ENCODE measurements at regions of chr4 and their contacts with region 1.

Region 1: DNA sequence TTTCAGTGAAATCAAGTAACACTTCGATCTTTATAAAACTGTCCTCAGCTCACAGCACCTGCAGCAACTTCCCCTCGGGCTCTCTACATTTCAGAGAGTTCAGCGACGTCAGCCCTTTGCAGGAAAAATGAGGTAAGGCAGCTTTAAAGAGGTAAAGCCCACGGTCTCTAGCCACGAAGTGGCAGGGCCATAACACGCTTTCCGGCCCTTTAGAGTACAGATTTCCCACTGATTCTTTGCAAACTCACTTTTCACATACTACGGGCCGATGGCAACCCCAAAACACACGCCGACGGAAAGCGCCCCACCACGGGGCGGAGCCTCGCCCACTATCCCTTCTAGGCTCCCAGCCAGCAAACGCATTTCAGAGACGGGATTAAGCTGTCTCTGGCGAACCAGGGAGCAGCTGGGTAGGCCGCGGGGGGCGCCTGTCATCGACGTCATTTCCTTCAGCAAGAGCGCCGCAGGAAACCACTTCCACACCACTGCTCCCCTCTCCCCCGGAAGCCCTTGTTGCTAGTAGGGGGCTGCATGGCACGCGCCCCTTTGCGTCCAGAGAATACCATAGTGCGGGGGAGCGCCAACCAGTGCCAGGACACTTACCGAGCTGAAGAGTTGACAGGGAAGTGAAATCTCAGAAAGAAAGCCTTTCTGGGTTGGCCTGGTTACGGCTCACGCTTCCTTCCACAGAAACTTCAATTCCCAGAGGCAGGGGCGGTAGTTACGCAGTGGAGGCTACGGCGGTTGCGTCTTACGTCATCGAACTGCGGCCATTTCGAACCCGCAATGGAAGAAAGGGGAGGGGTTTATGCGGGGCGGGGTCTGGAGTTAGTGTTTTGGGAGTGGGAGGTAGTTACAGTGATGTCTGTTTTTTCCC is at the start of gene TRMT10A:
- DNase-seq: peak; percentile 87 to 98 (median 95)
- ATAC-seq: peak; percentile 79
- H3K4me3 ChIP-seq: peak within 1 kb of the TSS; percentile 71 to 83
- H3K4me3 Mint-ChIP-seq: peak within 1 kb of the TSS; percentile 94
- H3K27ac ChIP-seq: peak within 1 kb of the TSS; percentile 92 to 96
- H3K27ac Mint-ChIP-seq: peak within 1 kb of the TSS; percentile 99
- H3K4me1 ChIP-seq: no peaks in the 10 kb centered on the region
- H3K4me1 Mint-ChIP-seq: peaks cover 19% of the 10 kb centered on the region
- H3K27me3 ChIP-seq: no peaks in the 10 kb centered on the region
- H3K27me3 Mint-ChIP-seq: peaks cover 19% of the 10 kb centered on the region
- CTCF ChIP-seq: no peak
- total RNA-seq, gene TRMT10A: 0.90 to 1.5 TPM

Region 2: DNA sequence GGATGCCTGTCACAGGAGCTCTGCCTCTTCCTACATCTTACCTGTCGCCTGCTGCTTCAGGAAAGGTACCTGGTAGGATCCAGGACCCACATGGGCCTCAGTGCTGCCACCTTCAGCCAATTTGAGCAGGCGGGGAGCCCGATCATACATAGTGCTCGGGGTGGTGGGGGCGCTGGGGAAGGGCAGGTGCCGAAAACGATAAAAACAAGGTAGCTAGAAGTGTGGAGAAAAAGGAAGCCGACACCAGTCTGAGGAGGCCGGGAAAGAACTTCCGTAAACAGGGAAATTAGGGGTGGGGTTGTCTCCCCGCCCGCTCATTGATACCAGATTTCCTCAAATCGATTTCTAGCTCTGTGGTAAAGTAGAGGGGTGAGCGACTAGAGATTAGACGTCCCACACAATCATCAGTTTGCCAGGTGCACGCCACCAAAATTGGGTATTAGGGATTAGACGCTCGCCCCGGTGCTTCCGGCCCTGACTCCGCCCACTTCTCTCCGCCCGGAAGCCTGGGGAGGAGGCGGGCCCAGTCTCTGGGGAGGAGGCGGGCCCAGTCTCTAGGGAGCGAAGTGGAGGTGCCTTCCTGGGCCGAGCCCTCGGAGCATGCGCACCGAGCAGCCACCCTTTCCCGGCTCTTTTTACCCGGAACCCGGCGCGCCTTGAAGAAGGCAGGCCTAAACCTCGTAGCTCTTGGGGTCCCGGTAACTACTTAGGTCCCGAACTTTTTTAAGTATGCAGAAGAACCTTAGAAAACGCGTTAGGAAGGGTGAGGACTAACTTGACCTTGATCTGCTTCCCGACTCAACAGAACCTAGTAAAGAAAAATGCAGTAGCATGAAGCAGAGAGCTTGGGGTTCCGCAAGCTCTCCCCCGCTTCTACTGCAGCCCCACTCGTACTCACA is 1420.3 kb before region 1 on chr4 and contains the start of gene STPG2:
- CTCF ChIA-PET with region 1: no interaction called
- POLR2A ChIA-PET with region 1: no interaction called
- intact Hi-C with region 1: loop called (anchors 1 to 5 kb)
- DNase-seq: peak; percentile 87 to 96 (median 93)
- ATAC-seq: peak; percentile 99
- H3K4me3 ChIP-seq: peak within 1 kb of the TSS; percentile 69 to 70
- H3K4me3 Mint-ChIP-seq: peak within 1 kb of the TSS; percentile 94
- H3K27ac ChIP-seq: peak within 1 kb of the TSS; percentile 68 to 90
- H3K27ac Mint-ChIP-seq: peak within 1 kb of the TSS; percentile 96
- H3K4me1 ChIP-seq: peaks cover 7% of the 10 kb centered on the region
- H3K4me1 Mint-ChIP-seq: peaks cover 17% of the 10 kb centered on the region
- H3K27me3 ChIP-seq: peaks cover 0 to 2% of the 10 kb centered on the region in 2 experiments
- H3K27me3 Mint-ChIP-seq: no peaks in the 10 kb centered on the region
- CTCF ChIP-seq: peak; percentile 64
- total RNA-seq, gene STPG2: not detected

Region 3: GRCh38 chr4:98928505-98929340 is 634.8 kb before region 1 on chr4 and contains the start of gene EIF4E:
- CTCF ChIA-PET with region 1: no interaction called
- POLR2A ChIA-PET with region 1: no interaction called
- intact Hi-C with region 1: loop called in 1 of 2 experiments (anchors 5 kb)
- DNase-seq: peak; percentile 93 to 99 (median 94)
- ATAC-seq: peak; percentile 80
- H3K4me3 ChIP-seq: peak within 1 kb of the TSS; percentile 99 to 100
- H3K4me3 Mint-ChIP-seq: peak within 1 kb of the TSS; percentile 99
- H3K27ac ChIP-seq: peak within 1 kb of the TSS; percentile 89 to 94
- H3K27ac Mint-ChIP-seq: peak within 1 kb of the TSS; percentile 97
- H3K4me1 ChIP-seq: peaks cover 15% of the 10 kb centered on the region
- H3K4me1 Mint-ChIP-seq: peaks cover 46% of the 10 kb centered on the region
- H3K27me3 ChIP-seq: no peaks in the 10 kb centered on the region
- H3K27me3 Mint-ChIP-seq: no peaks in the 10 kb centered on the region
- CTCF ChIP-seq: peak; percentile 32
- total RNA-seq, gene EIF4E: 66.7 to 68.5 TPM

Region 4: GRCh38 chr4:99504804-99505569 is 58.6 kb before region 1 on chr4:
- CTCF ChIA-PET with region 1: no interaction called
- POLR2A ChIA-PET with region 1: interaction called, 3 read pairs
- intact Hi-C with region 1: loop called in 1 of 2 experiments (anchors 1 kb)
- DNase-seq: no peak
- ATAC-seq: no peak
- H3K4me3 ChIP-seq: no peak overlapping the region
- H3K4me3 Mint-ChIP-seq: no peak overlapping the region
- H3K27ac ChIP-seq: no peak overlapping the region
- H3K27ac Mint-ChIP-seq: peak overlapping the region; percentile 23
- H3K4me1 ChIP-seq: peaks cover 35% of the 10 kb centered on the region
- H3K4me1 Mint-ChIP-seq: peaks cover 39% of the 10 kb centered on the region
- H3K27me3 ChIP-seq: no peaks in the 10 kb centered on the region
- H3K27me3 Mint-ChIP-seq: no peaks in the 10 kb centered on the region
- CTCF ChIP-seq: no peak

Region 5: GRCh38 chr4:99885063-99885664 is 321.6 kb after region 1 on chr4:
- CTCF ChIA-PET with region 1: interaction called, 7 read pairs
- POLR2A ChIA-PET with region 1: no interaction called
- intact Hi-C with region 1: loop called (anchors 1 kb)
- DNase-seq: peak in 4 of 9 experiments; percentile 20 to 72 (median 41)
- ATAC-seq: no peak
- H3K4me3 ChIP-seq: no peak overlapping the region
- H3K4me3 Mint-ChIP-seq: no peak overlapping the region
- H3K27ac ChIP-seq: no peak overlapping the region
- H3K27ac Mint-ChIP-seq: no peak overlapping the region
- H3K4me1 ChIP-seq: peaks cover 2% of the 10 kb centered on the region
- H3K4me1 Mint-ChIP-seq: peaks cover 16% of the 10 kb centered on the region
- H3K27me3 ChIP-seq: no peaks in the 10 kb centered on the region
- H3K27me3 Mint-ChIP-seq: no peaks in the 10 kb centered on the region
- CTCF ChIP-seq: peak; percentile 67

Region 6: GRCh38 chr4:100060765-100061416 is 497.3 kb after region 1 on chr4:
- CTCF ChIA-PET with region 1: no interaction called
- POLR2A ChIA-PET with region 1: no interaction called
- intact Hi-C with region 1: loop called (anchors 1 to 5 kb)
- DNase-seq: no peak
- ATAC-seq: no peak
- H3K4me3 ChIP-seq: no peak overlapping the region
- H3K4me3 Mint-ChIP-seq: no peak overlapping the region
- H3K27ac ChIP-seq: no peak overlapping the region
- H3K27ac Mint-ChIP-seq: no peak overlapping the region
- H3K4me1 ChIP-seq: no peaks in the 10 kb centered on the region
- H3K4me1 Mint-ChIP-seq: no peaks in the 10 kb centered on the region
- H3K27me3 ChIP-seq: peaks cover 0 to 6% of the 10 kb centered on the region in 2 experiments
- H3K27me3 Mint-ChIP-seq: no peaks in the 10 kb centered on the region
- CTCF ChIP-seq: no peak

Region 7: GRCh38 chr4:101328063-101328602 is 1764.6 kb after region 1 on chr4:
- CTCF ChIA-PET with region 1: no interaction called
- POLR2A ChIA-PET with region 1: no interaction called
- intact Hi-C with region 1: loop called in 1 of 2 experiments (anchors 10 kb)
- DNase-seq: peak in 3 of 9 experiments; percentile 27 to 84 (median 70)
- ATAC-seq: peak; percentile 84
- H3K4me3 ChIP-seq: peak overlapping the region; percentile 15
- H3K4me3 Mint-ChIP-seq: peak overlapping the region; percentile 70
- H3K27ac ChIP-seq: peak overlapping the region; percentile 20 to 71
- H3K27ac Mint-ChIP-seq: peak overlapping the region; percentile 91
- H3K4me1 ChIP-seq: peaks cover 28% of the 10 kb centered on the region
- H3K4me1 Mint-ChIP-seq: peaks cover 68% of the 10 kb centered on the region
- H3K27me3 ChIP-seq: no peaks in the 10 kb centered on the region
- H3K27me3 Mint-ChIP-seq: no peaks in the 10 kb centered on the region
- CTCF ChIP-seq: no peak